CD8-positive, alpha-beta T cell (primary cell): ENCODE measurements at regions of chrX and their contacts with region 1.

Region 1: DNA sequence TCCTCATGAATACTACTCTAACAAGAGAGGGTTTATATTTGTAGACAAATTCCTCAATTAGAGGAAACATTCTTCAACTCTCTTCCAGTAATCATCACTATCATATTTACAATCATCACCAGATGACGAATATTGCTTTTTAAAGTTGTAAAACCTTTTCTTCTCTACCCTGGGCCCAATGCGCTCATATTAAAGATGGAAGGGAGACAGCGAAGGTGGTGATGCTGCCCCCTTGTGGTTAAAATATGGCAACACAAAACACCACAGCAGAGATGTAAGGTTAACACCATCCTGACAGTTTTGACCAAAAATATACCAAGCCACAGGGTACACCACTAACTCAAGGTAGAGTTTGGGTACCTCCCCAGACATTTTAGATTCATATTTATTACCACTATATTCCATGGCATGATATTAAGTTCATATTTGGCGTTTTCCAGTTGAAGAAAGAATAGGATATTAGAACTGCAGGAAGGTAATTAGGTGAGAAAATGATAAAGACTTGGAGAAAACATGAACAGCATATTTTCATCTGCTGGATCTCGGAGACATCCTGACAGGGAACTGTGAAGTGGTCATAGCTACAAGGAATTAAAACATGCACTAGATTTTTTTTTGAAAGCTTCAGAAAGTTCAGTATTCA is 72.8 kb downstream of the SLC9A7 start:
- DNase-seq: peak in 8 of 9 experiments; percentile 2 to 63 (median 27)
- ATAC-seq: peak; percentile 40
- H3K4me3 ChIP-seq: no peak overlapping the region
- H3K4me3 Mint-ChIP-seq: no peak overlapping the region
- H3K27ac ChIP-seq: no peak overlapping the region
- H3K27ac Mint-ChIP-seq: no peak overlapping the region
- H3K4me1 ChIP-seq: no peaks in the 10 kb centered on the region
- H3K4me1 Mint-ChIP-seq: peaks cover 2% of the 10 kb centered on the region
- H3K27me3 ChIP-seq: no peaks in the 10 kb centered on the region
- H3K27me3 Mint-ChIP-seq: no peaks in the 10 kb centered on the region
- CTCF ChIP-seq: peak; percentile 55

Region 2: DNA sequence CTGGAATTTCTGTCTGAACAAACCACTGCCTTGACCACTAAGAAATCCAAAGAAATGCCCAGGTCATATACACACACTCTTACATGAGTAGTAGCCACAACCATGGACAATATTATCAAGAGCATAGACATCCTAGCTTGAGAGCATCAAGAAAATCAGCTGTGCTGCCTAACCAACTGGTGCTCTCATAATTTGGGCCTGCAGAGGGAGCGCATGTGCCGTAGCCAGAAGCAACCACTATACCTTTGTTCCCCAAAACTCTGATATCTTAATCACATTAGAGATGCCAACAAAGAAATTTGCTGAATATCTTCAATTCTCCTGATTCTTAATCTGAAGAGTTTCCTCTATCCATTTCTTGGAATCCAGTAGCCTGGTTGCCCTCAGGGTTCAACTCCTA is 304.5 kb before region 1 on chrX:
- CTCF ChIA-PET with region 1: no interaction called
- POLR2A ChIA-PET with region 1: no interaction called
- intact Hi-C with region 1: loop called in 1 of 2 experiments (anchors 1 kb)
- DNase-seq: peak in 5 of 9 experiments; percentile 0 to 27 (median 12)
- ATAC-seq: no peak
- H3K4me3 ChIP-seq: no peak overlapping the region
- H3K4me3 Mint-ChIP-seq: no peak overlapping the region
- H3K27ac ChIP-seq: no peak overlapping the region
- H3K27ac Mint-ChIP-seq: no peak overlapping the region
- H3K4me1 ChIP-seq: no peaks in the 10 kb centered on the region
- H3K4me1 Mint-ChIP-seq: no peaks in the 10 kb centered on the region
- H3K27me3 ChIP-seq: no peaks in the 10 kb centered on the region
- H3K27me3 Mint-ChIP-seq: no peaks in the 10 kb centered on the region
- CTCF ChIP-seq: no peak

Region 3: DNA sequence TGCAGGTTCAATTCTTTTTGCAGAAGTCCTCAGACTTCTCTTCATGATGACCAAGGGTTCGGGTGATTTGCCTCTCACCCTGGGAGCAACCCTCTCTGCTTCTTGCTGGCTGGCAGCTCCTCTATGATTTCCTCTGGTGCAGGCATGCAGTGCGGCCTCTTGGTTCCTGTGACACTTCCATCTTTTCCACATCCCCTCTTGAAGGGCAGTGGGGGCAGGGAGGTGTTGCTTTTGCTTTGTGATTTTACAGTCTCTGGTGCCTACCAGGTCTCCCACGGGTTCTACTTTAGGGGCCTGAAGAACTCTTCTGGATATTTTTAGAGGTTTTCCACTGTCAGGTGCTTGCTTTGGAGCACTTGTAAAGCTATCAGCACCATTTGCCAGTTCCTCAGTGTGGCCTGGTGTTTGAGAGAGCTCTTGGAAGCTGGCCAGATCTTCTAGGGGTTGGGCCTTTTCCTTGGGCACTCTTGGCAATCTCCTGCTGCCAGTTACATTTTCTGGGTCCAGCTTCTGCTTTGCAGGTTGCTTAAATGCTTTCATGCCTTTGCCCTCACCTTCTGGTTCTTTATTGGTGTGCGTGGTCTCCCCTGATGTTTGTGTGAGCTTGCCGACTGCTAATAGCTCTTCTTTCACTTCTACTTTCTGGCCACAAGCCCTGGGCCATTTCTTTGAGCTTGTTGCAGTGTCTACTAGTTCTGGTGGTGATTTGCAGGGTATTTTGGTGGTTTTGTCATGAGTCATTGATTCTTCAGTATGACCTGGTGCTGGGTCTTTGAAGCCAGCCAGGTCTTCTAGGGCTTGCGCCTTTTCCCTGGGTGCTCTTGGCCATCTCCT is 124.1 kb before region 1 on chrX:
- CTCF ChIA-PET with region 1: no interaction called
- POLR2A ChIA-PET with region 1: no interaction called
- intact Hi-C with region 1: loop called in 1 of 2 experiments (anchors 2 kb)
- DNase-seq: peak in 2 of 9 experiments; percentile 12 to 37
- ATAC-seq: no peak
- H3K4me3 ChIP-seq: no peak overlapping the region
- H3K4me3 Mint-ChIP-seq: no peak overlapping the region
- H3K27ac ChIP-seq: peak overlapping the region in 1 of 2 experiments; percentile 36
- H3K27ac Mint-ChIP-seq: no peak overlapping the region
- H3K4me1 ChIP-seq: no peaks in the 10 kb centered on the region
- H3K4me1 Mint-ChIP-seq: peaks cover 2% of the 10 kb centered on the region
- H3K27me3 ChIP-seq: no peaks in the 10 kb centered on the region
- H3K27me3 Mint-ChIP-seq: no peaks in the 10 kb centered on the region
- CTCF ChIP-seq: no peak

Region 4: DNA sequence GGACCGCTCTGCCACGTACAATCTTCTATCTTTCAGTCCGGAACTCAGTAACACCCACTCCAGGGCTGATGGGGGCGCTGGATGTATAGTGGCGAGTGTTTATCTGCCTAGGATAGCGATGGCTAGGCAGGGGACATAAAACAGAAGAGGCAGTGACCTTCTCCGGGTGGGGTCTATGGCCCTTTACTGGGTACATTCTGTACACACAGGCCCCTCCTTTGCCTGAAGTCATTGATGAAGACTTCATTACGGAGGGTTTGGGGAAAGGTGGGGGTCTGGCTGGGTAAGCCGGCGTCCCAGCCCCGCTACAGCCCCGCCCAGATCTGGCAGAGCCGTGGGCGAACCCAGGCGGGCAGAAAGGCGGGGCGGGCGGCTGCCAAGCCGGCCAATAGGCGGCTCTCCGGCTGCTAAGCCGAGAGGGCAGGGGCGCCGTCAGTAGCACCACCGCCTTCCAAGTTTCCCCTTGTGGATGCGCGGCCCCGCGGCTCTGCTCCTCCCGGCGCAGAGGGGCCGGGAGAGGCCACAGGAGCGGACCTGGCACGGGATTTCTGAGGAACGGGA is 112.7 kb before region 1 on chrX and contains the start of gene CHST7:
- CTCF ChIA-PET with region 1: interaction called, 3 read pairs
- POLR2A ChIA-PET with region 1: no interaction called
- intact Hi-C with region 1: loop called in 1 of 2 experiments (anchors 5 kb)
- DNase-seq: peak; percentile 15 to 77 (median 54)
- ATAC-seq: peak; percentile 57
- H3K4me3 ChIP-seq: peak within 1 kb of the TSS; percentile 63 to 64
- H3K4me3 Mint-ChIP-seq: peak within 1 kb of the TSS; percentile 79
- H3K27ac ChIP-seq: peak within 1 kb of the TSS; percentile 45 to 77
- H3K27ac Mint-ChIP-seq: peak within 1 kb of the TSS; percentile 87
- H3K4me1 ChIP-seq: peaks cover 27% of the 10 kb centered on the region
- H3K4me1 Mint-ChIP-seq: peaks cover 34% of the 10 kb centered on the region
- H3K27me3 ChIP-seq: no peaks in the 10 kb centered on the region
- H3K27me3 Mint-ChIP-seq: peaks cover 3% of the 10 kb centered on the region
- CTCF ChIP-seq: no peak
- total RNA-seq, gene CHST7: 9.4 to 9.7 TPM

Region 5: GRCh38 chrX:47475476-47475875 is 789.4 kb after region 1 on chrX:
- CTCF ChIA-PET with region 1: no interaction called
- POLR2A ChIA-PET with region 1: no interaction called
- intact Hi-C with region 1: no loop called
- DNase-seq: no peak
- ATAC-seq: no peak
- H3K4me3 ChIP-seq: no peak overlapping the region
- H3K4me3 Mint-ChIP-seq: no peak overlapping the region
- H3K27ac ChIP-seq: no peak overlapping the region
- H3K27ac Mint-ChIP-seq: no peak overlapping the region
- H3K4me1 ChIP-seq: no peaks in the 10 kb centered on the region
- H3K4me1 Mint-ChIP-seq: peaks cover 42% of the 10 kb centered on the region
- H3K27me3 ChIP-seq: no peaks in the 10 kb centered on the region
- H3K27me3 Mint-ChIP-seq: no peaks in the 10 kb centered on the region
- CTCF ChIP-seq: no peak